Activated CD4-positive, alpha-beta T cell treated with anti-CD3 and anti-CD28 coated beads, Interleukin-2, amount 10 ng/mL, durations not matched to agents 24 days and 14 days (primary cell): ENCODE measurements at regions of chr10 and their contacts with region 1.

Region 1: GRCh38 chr10:6202684-6203330 is at the start of gene PFKFB3:
- DNase-seq: peak; percentile 99
- H3K4me3 Mint-ChIP-seq: peak within 1 kb of the TSS; percentile 92
- H3K27ac Mint-ChIP-seq: peak within 1 kb of the TSS; percentile 97
- H3K4me1 Mint-ChIP-seq: peaks cover 42% of the 10 kb centered on the region
- H3K27me3 Mint-ChIP-seq: no peaks in the 10 kb centered on the region
- total RNA-seq, gene PFKFB3: 108 TPM in 2 replicates

Region 2: GRCh38 chr10:6128591-6129251 is 74.1 kb before region 1 on chr10:
- intact Hi-C with region 1: loop called (anchors 2 kb)
- DNase-seq: no peak
- H3K4me3 Mint-ChIP-seq: peak overlapping the region; percentile 70
- H3K27ac Mint-ChIP-seq: peak overlapping the region; percentile 94
- H3K4me1 Mint-ChIP-seq: peaks cover 36% of the 10 kb centered on the region
- H3K27me3 Mint-ChIP-seq: no peaks in the 10 kb centered on the region

Region 3: DNA sequence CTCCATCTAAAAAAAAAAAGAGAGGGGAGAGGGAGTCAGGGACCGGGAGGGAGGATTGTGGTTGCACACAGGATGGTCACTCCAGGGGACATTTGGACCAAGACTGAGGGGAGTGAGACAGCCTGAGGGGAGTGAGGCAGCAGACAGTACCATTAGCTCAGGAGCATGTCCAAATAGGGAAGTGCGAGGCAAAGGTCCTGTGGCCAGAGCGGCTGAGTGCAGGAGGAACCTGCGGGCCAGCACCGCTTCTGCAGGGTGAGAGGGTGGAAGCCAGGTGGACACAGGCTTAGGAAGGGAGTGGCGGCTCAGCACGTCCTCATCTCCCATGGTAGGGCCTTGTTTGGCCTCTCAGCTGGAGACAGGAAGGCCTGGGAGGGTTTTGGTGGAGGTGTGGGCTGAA is 49.0 kb before region 1 on chr10:
- intact Hi-C with region 1: no loop called
- DNase-seq: no peak
- H3K4me3 Mint-ChIP-seq: no peak overlapping the region
- H3K27ac Mint-ChIP-seq: no peak overlapping the region
- H3K4me1 Mint-ChIP-seq: peaks cover 28% of the 10 kb centered on the region
- H3K27me3 Mint-ChIP-seq: no peaks in the 10 kb centered on the region

Region 4: DNA sequence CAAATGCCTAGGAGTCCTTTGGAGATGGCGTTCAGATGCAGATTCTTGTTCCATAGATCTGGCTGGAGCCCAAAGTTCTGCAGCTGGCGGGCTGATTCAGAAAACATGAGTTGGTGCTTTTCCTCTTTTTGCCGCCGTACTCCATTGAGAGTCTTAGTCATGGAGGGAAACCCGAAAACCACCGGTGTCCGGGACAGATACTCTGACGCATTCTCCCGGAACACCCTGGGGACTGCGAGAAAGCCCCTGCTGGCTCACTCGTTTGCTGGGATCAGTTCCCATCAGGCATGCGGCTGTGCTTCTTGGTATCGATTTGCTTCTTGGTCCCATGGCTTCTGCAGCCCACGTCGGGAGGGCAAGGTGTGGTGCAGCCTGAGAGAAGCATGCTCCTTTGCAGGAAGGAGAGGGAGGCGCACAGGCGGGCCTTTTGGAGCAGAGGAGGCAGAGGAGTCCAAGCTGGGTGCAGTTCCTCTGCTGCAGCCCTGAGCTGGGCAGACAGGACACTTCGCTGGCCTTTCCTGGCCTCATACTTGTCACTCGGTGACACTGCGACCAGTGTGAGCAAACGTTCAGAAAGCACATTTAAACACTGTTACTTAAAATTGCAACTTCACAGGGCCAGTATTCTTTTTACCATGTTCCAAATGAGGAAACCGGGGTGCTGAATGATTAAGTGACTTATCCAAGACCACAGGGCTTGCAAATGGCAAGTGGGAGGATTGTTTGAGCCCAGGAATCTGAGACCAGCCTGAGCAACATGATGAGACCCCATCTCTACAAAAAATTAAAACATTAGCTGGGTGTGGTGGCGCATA is 30.7 kb before region 1 on chr10:
- intact Hi-C with region 1: loop called (anchors 1 kb)
- DNase-seq: peak; percentile 77
- H3K4me3 Mint-ChIP-seq: peak overlapping the region; percentile 74
- H3K27ac Mint-ChIP-seq: peak overlapping the region; percentile 85
- H3K4me1 Mint-ChIP-seq: peaks cover 79% of the 10 kb centered on the region
- H3K27me3 Mint-ChIP-seq: no peaks in the 10 kb centered on the region

Region 5: DNA sequence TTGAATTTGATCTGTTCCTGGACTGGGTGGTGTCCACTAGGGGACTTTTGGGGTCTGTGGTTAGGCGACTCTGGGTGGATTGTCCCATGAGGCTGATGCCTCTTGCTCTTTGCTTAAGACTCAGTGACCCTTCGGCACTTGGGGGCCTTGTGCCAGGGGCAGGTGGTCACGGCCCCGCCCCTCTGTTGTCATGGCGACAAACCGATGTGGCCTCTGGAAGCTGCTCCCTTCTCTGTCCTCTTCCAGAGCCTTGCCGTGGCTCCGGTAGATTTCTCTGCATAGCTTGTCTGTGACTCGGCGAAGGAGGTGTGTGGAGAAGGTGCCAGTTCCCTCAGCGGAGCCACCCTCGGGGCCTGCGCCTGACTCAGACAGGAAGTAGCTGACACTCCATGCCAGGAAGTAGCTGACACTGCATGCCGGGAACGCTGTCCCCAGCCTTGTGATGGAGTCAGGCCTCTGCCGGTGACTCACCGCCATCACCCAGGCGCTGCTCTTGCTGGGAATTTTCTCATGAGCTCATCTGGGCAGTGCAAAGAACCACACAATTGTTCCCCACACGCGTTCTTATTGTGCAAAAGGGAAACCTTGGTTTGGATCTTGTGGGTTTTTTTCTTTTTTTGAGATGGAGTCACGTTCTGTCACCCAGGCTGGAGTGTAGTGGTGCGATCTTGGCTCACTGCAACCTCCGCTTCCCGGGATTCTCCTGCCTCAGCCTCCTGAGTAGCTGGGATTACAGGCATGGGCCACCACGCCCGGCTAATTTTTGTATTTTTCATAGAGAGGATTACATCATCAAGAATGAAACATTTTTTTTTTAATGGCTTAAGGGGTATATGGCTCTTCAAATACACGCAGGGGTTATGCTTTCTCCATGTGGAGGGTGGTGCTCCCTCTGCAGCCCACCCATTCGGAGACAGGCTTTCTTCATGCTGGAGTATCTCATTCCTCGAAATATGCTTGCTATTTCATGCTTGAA is 72.5 kb after region 1 on chr10:
- intact Hi-C with region 1: loop called (anchors 1 kb)
- DNase-seq: peak; percentile 95
- H3K4me3 Mint-ChIP-seq: peak overlapping the region; percentile 79
- H3K27ac Mint-ChIP-seq: peak overlapping the region; percentile 95
- H3K4me1 Mint-ChIP-seq: peaks cover 65% of the 10 kb centered on the region
- H3K27me3 Mint-ChIP-seq: no peaks in the 10 kb centered on the region

Region 6: GRCh38 chr10:6401562-6402348 is 198.9 kb after region 1 on chr10:
- intact Hi-C with region 1: loop called (anchors 1 kb)
- DNase-seq: peak; percentile 90
- H3K4me3 Mint-ChIP-seq: peak overlapping the region; percentile 24
- H3K27ac Mint-ChIP-seq: peak overlapping the region; percentile 16
- H3K4me1 Mint-ChIP-seq: peaks cover 27% of the 10 kb centered on the region
- H3K27me3 Mint-ChIP-seq: peaks cover 3% of the 10 kb centered on the region